A549 (cell line): ENCODE measurements at regions of chr6 and their contacts with region 1.

Region 1: DNA sequence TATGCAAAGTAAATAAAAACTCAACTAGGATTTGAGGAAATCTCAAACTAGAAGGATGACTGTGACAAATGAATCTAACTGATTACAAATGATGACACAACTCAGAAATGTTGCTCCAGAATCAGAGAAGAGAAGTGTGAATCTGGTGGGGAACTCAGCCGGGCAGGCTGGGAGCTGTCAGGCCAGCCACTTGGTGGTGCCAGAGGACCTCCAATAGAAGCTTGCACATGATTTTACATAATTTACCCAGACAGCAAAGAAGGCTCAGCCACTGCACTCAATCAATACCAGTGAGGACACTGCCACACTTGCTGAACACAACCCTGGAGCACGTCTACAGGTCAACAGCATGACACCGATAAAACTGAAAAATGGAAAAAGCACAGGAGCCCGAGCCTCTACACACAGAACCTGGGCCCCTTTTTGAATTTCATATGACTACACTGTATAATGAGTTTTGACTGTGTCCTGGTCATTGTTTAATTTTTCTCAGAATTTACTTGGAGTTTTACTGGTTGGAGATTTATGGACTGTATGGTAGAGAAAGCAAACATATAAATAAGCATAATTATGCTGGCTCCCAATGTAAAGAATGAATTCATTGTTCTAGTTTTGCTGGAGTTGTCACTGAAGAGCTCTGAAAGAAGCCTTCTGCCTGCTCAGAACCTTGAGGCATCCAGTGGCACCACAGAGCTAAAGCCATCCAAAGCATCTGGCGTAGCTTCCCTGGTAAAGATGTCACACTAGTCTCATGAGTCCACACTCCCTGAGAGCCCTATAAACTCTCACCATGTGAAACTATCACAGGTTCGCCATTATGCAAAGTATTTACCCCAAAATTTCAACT is 296.5 kb downstream of the THBS2 start:
- DNase-seq: peak; percentile 46 to 60
- ATAC-seq: peak; percentile 92 to 93
- H3K4me3 ChIP-seq: no peak overlapping the region
- H3K27ac ChIP-seq: peak overlapping the region; percentile 35 to 73; a peak in 4 of 6 replicates
- H3K4me1 ChIP-seq: peaks cover 7% of the 10 kb centered on the region; the same call in 2 of the 3 replicates
- CTCF ChIP-seq: peak; percentile 77
- EP300 ChIP-seq: no peak
- POLR2A ChIP-seq: no peak
- RAD21 ChIP-seq: peak; percentile 86 to 93

Region 2: GRCh38 chr6:168791917-168792316 is 165.2 kb before region 1 on chr6:
- CTCF ChIA-PET with region 1: no interaction called
- POLR2A ChIA-PET with region 1: no interaction called
- DNase-seq: no peak
- ATAC-seq: no peak
- H3K4me3 ChIP-seq: no peak overlapping the region
- H3K27ac ChIP-seq: no peak overlapping the region
- H3K4me1 ChIP-seq: no peaks in the 10 kb centered on the region
- CTCF ChIP-seq: no peak
- EP300 ChIP-seq: no peak
- POLR2A ChIP-seq: no peak
- RAD21 ChIP-seq: no peak

Region 3: DNA sequence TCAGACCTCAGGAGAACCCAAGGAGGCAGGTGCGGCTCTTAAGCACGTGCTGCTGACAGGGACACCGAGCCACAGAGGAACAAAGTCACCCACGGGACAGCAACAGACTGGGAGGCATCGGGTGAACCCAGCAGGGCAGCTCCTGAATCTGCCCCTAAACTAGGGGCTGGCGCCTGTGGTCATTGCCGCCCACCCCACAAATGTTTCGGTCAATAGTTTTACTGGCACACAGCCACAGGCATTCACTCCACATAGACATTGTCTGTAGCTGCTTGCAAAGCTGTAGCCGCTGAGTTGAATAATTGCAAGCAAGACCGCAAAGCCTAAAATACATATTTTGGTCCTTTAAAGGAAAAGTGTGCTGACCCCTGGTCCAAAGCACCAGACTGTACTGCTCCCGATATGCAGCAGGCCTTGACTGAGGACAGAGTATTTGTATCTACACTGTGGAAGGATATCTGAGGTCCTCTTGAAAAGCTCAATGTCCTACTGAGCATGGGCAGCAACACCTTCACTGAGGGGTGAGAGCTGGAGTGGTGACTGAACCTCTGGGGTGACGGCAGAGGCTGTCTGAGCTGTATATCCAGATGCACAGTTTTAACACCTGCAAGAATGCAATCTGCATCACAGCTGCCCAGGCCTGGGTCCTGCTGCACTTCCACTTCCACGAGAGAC is 13.7 kb before region 1 on chr6:
- CTCF ChIA-PET with region 1: interaction called, 11 read pairs
- POLR2A ChIA-PET with region 1: no interaction called
- DNase-seq: no peak
- ATAC-seq: no peak
- H3K4me3 ChIP-seq: no peak overlapping the region
- H3K27ac ChIP-seq: no peak overlapping the region
- H3K4me1 ChIP-seq: no peaks in the 10 kb centered on the region
- CTCF ChIP-seq: no peak
- EP300 ChIP-seq: no peak
- POLR2A ChIP-seq: no peak
- RAD21 ChIP-seq: no peak

Region 4: GRCh38 chr6:169075211-169075914 is 118.3 kb after region 1 on chr6:
- CTCF ChIA-PET with region 1: no interaction called
- POLR2A ChIA-PET with region 1: no interaction called
- DNase-seq: no peak
- ATAC-seq: no peak
- H3K4me3 ChIP-seq: no peak overlapping the region
- H3K27ac ChIP-seq: peak overlapping the region in 1 of 2 experiments; percentile 50; a peak in 1 of 6 replicates
- H3K4me1 ChIP-seq: peaks cover 20% of the 10 kb centered on the region
- CTCF ChIP-seq: no peak
- EP300 ChIP-seq: no peak
- POLR2A ChIP-seq: no peak
- RAD21 ChIP-seq: no peak